Heart right ventricle (tissue), 16 donors: ENCODE measurements at regions of chr5 and their contacts with region 1.

Region 1: GRCh38 chr5:6765612-6766525 is 52.6 kb downstream of the TENT4A start:
- DNase-seq: peak; percentile 71 to 76
- ATAC-seq: peak; percentile 67 to 89 (median 82)
- H3K4me3 ChIP-seq: peak overlapping the region in 2 of 10 donors; percentile 11 to 23
- H3K27ac ChIP-seq: peak overlapping the region in 1 of 10 donors; percentile 58
- H3K4me1 ChIP-seq: peaks cover 0 to 30% (median 15%) of the 10 kb centered on the region in 9 donors
- H3K27me3 ChIP-seq: no peaks in the 10 kb centered on the region
- CTCF ChIP-seq: peak; percentile 43 to 85 (median 78)

Region 2: DNA sequence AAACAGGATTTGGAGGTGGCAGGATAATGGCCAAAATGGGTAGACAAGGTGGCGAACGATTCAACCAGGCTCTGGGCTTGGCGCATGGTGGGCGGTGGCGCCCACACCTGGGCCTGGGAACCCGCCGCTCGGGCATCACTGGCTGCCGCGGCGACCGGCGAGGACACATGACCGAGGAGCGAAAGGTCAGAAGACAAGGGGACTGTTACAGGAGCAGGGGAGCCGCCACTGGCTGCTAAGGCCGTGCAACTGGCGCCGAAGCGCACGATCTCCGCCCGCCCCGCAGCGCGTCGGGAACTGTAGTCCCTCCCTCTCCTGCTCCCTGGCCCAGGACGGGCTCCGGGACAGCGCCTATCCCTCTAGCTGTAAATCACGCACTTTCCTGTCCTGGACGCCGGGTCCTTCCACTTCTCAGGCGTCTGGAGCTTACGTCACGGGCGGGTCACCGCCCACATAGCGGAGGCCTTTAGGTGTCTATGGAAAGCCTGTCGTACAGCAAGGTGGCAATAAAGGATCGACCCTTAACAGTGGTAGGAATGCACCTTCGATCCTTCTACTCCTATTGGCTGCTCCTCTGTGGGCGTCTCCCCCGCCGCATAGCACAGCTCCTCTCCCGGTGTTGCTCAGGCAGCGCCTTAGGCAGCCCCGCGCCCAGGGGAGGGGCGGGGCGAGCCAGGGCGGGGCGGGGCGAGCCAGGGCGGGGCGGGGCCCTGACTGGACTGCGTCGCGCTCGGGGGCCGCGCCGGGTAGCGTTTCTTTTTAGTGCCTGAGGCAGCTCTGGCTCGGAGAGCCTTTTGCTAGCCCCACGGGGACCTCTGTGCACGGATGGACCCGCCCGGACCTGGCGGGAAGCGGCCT is 1343.7 kb before region 1 on chr5 and contains the start of gene ICE1:
- intact Hi-C with region 1: no loop called
- DNase-seq: peak; percentile 97 to 98
- ATAC-seq: peak; percentile 98 to 100 (median 99)
- H3K4me3 ChIP-seq: peak within 1 kb of the TSS; percentile 73 to 100 (median 94)
- H3K27ac ChIP-seq: peak within 1 kb of the TSS; percentile 82 to 99 (median 96)
- H3K4me1 ChIP-seq: peaks cover 9 to 62% (median 46%) of the 10 kb centered on the region in 9 donors
- H3K27me3 ChIP-seq: no peaks in the 10 kb centered on the region
- CTCF ChIP-seq: peak in 3 of 9 donors; percentile 15 to 26 (median 25)
- total RNA-seq, gene ICE1: 16.7 to 20.3 (median 18.6) TPM

Region 3: DNA sequence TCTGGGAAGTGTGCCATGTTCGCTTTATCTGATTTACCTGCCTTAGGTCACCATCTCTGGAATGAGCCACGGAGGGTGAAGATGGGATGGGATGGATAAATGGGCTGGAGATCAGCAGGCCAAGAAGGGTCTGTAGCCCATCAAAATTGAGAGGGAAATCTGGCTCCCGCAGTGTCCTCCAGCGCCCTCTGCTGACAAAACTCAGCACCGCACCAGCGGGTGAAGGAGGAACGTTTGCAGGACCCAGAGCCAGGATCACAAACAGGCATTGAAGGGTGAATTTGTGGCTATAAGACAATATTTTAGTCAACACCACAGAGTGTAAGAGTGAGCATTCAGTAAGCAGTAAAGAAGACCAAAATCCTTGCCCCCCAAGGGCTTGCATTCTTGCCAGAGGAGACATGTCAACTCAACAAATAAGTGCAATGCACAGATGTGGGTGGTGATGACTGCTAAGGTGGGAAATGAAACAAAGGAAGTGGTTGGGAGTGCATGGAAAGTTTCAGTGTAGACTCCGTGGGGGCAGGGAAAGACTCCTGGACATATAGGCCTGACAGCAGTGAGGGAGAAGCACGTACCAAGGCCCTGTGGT is 71.7 kb after region 1 on chr5:
- intact Hi-C with region 1: loop called in 2 of 10 experiments (anchors 5 kb)
- DNase-seq: peak in 1 of 2 donors; percentile 27
- ATAC-seq: no peak
- H3K4me3 ChIP-seq: no peak overlapping the region
- H3K27ac ChIP-seq: no peak overlapping the region
- H3K4me1 ChIP-seq: peaks cover 0 to 10% (median 8%) of the 10 kb centered on the region in 9 donors
- H3K27me3 ChIP-seq: peaks cover 0 to 29% (median 4%) of the 10 kb centered on the region in 7 donors
- CTCF ChIP-seq: peak in 8 of 9 donors; percentile 18 to 68 (median 40)

Region 4: GRCh38 chr5:7391814-7392692 is 626.2 kb after region 1 on chr5:
- intact Hi-C with region 1: loop called in 4 of 10 experiments (anchors 5 to 10 kb)
- DNase-seq: no peak
- ATAC-seq: peak in 2 of 8 donors; percentile 46 to 62
- H3K4me3 ChIP-seq: no peak overlapping the region
- H3K27ac ChIP-seq: no peak overlapping the region
- H3K4me1 ChIP-seq: peaks cover 0 to 12% (median 0%) of the 10 kb centered on the region in 9 donors
- H3K27me3 ChIP-seq: peaks cover 4 to 36% (median 30%) of the 10 kb centered on the region in 7 donors
- CTCF ChIP-seq: peak in 8 of 9 donors; percentile 30 to 59 (median 50)

Region 5: DNA sequence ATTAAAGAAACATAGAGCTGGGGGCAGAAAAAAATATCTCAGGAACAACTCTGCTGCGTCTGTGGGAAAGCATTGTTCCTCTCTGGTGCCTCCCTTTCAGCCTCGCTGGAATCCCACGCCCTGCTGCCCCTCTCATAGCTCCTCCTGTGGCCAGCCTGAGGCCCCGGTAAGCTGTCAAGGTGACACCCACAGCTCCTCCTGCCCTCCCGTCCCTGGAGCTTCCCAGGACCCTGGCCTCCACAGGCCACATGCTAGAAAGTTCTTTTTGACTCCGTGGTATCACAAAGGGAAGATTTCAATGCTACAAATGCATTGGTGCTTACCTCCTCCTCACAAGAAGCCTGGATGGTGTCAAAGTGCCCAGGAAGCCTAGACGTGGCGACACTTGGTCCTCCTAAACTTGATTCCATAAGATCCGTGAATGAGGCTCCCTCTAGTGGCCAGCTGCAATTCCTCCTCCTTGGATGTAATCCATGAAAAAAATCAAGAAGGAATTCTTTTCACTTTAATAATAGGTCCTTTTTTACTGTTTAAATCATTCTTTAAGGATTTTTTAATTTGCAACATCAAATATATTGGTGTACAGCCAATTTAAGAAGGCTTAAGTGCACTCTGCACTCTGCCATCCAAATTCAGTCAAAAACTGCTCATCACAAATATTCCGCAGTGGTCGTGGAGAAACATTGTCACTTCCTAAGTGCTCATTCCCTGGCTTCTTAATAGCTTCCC is 980.2 kb after region 1 on chr5:
- intact Hi-C with region 1: loop called in 9 of 10 experiments (anchors 5 to 10 kb)
- DNase-seq: peak; percentile 21 to 59
- ATAC-seq: peak in 1 of 8 donors; percentile 50
- H3K4me3 ChIP-seq: no peak overlapping the region
- H3K27ac ChIP-seq: no peak overlapping the region
- H3K4me1 ChIP-seq: no peaks in the 10 kb centered on the region
- H3K27me3 ChIP-seq: peaks cover 0 to 3% (median 0%) of the 10 kb centered on the region in 7 donors
- CTCF ChIP-seq: peak; percentile 52 to 88 (median 85)

Region 6: DNA sequence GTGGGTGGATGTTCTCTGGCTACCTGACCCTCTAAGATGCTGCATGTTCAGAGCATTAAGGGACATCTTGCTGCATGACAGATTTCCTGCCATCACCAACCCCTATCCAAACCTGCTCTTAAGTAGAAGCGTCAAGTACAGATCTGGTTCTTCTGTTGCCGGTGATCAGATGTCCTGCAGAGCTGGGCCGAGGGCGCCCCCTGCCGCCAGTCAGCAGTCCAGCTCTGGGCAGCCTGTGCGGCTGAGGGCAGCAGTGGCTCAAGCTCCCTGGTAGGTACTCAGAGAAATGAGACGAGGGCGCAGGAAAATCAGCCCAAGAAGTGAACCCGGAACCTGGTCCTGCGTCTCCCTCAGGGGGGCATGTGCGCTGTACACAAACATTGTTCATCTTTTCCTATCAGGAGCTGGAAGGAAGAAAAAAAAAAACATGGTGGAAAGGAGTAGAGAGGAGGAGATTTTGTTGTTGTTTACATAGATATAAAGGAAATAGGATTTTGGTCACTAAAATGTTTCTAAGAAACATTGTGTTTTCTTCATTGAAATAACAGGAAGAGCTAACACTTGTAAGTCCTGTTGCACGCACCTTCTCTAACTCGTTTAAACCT is 989.2 kb after region 1 on chr5:
- intact Hi-C with region 1: loop called in 1 of 10 experiments (anchors 5 kb)
- DNase-seq: peak in 1 of 2 donors; percentile 33
- ATAC-seq: peak in 3 of 8 donors; percentile 27 to 45 (median 39)
- H3K4me3 ChIP-seq: no peak overlapping the region
- H3K27ac ChIP-seq: no peak overlapping the region
- H3K4me1 ChIP-seq: no peaks in the 10 kb centered on the region
- H3K27me3 ChIP-seq: peaks cover 0 to 29% (median 21%) of the 10 kb centered on the region in 7 donors
- CTCF ChIP-seq: peak in 7 of 9 donors; percentile 35 to 71 (median 47)

Region 7: DNA sequence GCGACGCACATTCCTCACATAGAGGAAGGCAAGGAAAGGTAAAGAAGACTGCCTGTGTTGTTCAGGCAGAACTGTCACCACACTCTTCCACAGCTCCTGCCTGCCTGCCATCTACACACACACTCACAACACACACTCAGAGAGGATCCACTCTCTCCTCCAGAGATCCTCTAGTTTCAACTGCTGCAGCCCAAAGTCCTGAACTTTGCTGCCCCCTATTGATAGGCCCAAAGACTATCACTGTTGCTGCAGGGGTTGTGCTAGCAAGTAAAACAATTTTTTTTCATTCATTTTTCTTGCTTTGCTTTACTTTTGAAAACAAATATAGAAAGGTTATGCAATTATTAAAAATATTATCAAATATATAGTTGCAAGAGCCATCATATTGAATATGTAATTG is 1091.0 kb after region 1 on chr5:
- intact Hi-C with region 1: loop called in 1 of 10 experiments (anchors 5 kb)
- DNase-seq: peak in 1 of 2 donors; percentile 20
- ATAC-seq: peak in 4 of 8 donors; percentile 46 to 68 (median 65)
- H3K4me3 ChIP-seq: no peak overlapping the region
- H3K27ac ChIP-seq: no peak overlapping the region
- H3K4me1 ChIP-seq: peaks cover 0 to 9% (median 0%) of the 10 kb centered on the region in 9 donors
- H3K27me3 ChIP-seq: peaks cover 0 to 2% (median 0%) of the 10 kb centered on the region in 7 donors
- CTCF ChIP-seq: peak; percentile 35 to 72 (median 68)